ENCODE measurements at regions of chr16 and their contacts with region 1.

Region 1: DNA sequence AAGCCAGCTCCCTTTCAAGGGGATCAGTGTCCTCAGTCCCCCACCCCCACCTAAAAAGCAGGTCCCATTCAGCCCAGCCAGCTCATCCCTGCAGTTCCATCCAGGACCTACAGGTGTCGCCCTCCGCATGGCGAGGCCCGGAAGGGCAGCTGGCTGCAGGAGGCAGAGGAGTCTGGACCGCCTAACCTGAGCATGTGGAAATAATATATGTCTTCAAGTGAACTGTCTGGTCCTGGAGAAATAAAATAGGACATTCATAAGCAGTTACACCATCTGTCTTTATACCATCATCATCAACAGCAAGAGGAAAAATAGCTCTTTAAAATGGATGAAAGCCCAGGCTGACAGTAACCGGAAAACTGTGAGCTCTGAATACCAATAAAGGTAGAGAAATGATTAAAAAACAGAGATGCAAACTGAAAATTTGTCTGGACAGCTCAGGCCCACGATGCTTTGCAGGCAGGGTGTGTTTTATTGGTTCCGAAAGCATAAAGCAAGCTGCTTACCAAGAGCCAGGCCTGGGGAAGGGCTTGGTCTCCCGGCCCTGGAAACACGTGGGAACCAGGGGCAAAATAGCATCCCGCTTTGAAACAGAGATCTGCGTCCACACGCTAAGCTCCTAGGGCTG is 215.2 kb downstream of the ZFHX3 start:
- DNase-seq: peak; percentile 54 to 70 (median 62)
- H3K4me3 ChIP-seq: no peak overlapping the region
- H3K27ac ChIP-seq: no peak overlapping the region
- H3K4me1 ChIP-seq: peaks cover 0 to 18% (median 8%) of the 10 kb centered on the region in 4 experiments
- H3K27me3 ChIP-seq: no peaks in the 10 kb centered on the region

Region 2: DNA sequence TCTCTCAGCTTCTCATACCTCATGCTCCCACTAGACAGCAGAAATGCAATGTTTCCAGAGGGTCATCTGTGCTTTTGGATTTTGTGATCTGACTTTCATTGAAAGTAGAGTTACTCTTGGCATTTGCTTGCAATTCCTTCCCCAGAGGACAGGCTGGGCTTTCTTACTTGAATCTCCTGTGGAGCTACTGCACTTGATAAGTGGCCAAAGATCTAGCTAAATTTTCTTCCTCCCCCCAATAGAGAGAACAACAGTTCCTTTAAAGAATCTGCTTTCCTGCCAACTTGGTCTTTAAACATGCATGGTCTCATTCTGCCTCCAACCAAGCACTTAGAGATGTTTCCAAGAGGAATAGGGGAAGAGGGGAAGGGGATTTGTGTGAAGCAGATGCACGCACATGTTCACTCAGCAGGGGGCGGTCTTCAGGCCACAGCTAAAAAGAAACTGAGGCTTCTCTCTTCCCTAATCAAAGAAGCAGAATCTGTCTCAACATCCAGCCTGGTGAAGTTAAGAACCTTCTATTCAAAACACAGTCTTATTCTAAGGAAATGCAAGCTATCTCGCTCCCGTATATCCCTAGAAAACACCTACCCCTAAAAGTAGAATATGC is 14.4 kb before region 1 on chr16:
- CTCF ChIA-PET with region 1: interaction called, 10 read pairs
- POLR2A ChIA-PET with region 1: interaction called, 3 read pairs
- DNase-seq: no peak
- H3K4me3 ChIP-seq: no peak overlapping the region
- H3K27ac ChIP-seq: no peak overlapping the region
- H3K4me1 ChIP-seq: peaks cover 0 to 3% (median 0%) of the 10 kb centered on the region in 4 experiments
- H3K27me3 ChIP-seq: no peaks in the 10 kb centered on the region

Region 3: DNA sequence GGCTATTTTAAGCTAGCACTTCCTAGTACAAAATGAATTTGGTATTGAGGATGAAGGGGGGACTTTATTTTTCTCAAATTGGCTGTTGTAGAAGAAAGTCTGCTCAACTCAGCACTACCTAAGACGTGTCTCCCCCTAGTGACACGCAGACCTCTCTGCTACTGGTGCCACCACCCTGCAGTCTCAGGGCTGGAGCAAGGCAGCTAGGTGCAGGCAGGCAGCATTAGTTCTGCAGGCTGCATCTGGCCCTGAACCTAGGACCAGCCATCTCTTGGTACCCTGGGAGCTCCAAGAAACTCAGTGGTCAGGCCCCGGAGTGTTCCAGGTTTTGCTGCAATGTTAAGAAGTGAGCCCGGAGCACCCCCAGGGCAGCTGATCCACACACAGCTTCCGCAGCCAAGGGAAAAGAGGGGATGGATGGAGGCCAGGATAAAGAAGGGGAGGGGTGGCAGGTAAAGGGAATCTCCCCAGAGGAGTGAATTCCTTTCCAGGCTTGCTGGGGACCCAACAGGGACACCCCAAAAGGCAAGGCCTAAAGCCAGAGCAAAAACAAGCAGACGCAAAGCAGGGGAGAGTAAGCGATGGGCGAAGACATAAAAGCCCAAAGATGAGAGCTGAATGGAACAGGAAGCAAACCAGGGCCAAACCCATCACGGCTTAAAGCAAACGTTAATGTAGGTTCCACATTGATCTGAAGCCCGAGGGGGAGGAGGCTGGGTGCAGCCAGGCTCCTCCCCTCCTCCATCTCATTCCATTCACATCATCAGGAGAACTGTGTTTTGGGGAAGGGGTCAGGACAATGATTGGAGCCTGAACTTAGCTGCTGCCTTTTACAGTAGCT is 14.7 kb after region 1 on chr16:
- CTCF ChIA-PET with region 1: interaction called, 58 read pairs
- POLR2A ChIA-PET with region 1: no interaction called
- DNase-seq: peak; percentile 54 to 75 (median 71)
- H3K4me3 ChIP-seq: no peak overlapping the region
- H3K27ac ChIP-seq: no peak overlapping the region
- H3K4me1 ChIP-seq: peaks cover 0 to 61% (median 47%) of the 10 kb centered on the region in 4 experiments
- H3K27me3 ChIP-seq: no peaks in the 10 kb centered on the region

Region 4: DNA sequence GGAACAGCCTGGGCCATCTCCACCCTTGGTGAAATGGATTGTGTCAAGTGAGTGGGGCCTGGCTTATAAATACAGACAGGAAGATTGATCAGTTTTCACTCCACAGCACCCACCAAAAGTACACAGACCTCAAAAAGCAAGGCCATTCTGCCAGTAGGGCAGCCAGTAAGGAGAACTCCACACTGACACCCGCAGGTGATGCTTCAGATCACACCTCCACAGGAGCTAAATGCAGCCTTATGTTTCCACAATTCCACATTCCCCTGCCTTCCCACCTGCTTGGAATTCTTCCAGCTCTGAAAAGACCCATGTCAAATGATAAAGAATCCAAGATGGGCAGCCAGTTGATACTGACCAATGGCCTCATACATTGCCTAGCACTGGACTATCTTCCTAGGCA is 24.1 kb after region 1 on chr16:
- CTCF ChIA-PET with region 1: interaction called, 25 read pairs
- POLR2A ChIA-PET with region 1: no interaction called
- DNase-seq: peak in 2 of 3 donors; percentile 43 to 58
- H3K4me3 ChIP-seq: no peak overlapping the region
- H3K27ac ChIP-seq: no peak overlapping the region
- H3K4me1 ChIP-seq: peaks cover 8 to 39% (median 13%) of the 10 kb centered on the region in 4 experiments
- H3K27me3 ChIP-seq: no peaks in the 10 kb centered on the region

Region 5: DNA sequence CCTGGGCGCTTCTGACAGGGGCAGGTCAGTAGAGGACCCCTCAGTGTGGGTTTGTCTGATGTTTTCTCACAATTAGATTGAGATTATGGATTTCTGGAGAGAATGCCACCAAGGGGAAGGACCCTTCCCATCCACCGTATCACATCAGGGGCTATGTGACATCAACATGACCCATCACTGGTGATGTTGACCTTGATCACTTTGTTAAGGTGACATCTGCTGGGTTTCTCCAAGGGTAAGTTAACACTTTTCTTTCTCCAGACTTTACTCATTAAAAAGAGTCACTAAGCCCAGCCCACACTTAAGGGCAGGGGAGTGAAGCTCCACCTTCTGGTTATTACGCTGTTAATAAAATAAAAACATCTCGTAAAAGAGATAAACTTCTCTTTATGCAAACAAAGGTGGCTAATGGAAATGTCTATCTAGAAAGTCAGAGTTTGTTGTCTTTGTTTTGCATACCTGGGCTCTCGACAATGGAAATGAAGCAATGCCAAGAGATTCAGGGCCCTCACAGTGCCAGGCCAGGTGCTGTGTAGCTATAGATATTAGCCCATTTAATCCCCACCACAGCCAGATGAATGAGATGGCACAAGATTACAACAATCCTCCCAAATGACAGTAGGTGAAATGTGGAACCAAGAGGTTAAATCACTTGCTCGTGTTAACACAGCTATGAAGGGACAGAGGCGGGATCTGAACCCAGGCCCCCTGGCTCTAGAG is 80.8 kb after region 1 on chr16:
- CTCF ChIA-PET with region 1: no interaction called
- POLR2A ChIA-PET with region 1: no interaction called
- DNase-seq: no peak
- H3K4me3 ChIP-seq: no peak overlapping the region
- H3K27ac ChIP-seq: no peak overlapping the region
- H3K4me1 ChIP-seq: no peaks in the 10 kb centered on the region
- H3K27me3 ChIP-seq: no peaks in the 10 kb centered on the region

Region 6: DNA sequence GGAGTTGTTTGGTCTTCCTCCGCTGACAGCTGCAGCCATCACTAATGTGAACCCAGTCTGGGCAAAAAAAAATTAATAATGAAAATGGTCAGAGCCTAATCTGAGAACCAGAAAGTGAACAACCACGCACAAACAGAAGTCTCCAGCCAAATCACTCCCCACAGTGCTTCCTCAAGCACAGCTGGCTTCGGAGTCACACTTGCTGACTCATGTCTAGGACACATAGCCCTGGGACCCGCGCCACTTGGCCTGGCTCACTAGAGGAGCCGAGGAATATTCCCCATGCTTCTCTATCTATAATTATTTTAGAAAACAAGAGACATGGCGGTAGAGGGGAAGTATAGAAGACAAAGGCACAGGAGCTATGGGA is 106.0 kb after region 1 on chr16:
- CTCF ChIA-PET with region 1: interaction called, 11 read pairs
- POLR2A ChIA-PET with region 1: no interaction called
- DNase-seq: peak; percentile 68 to 92 (median 88)
- H3K4me3 ChIP-seq: peak overlapping the region in 2 of 7 experiments; percentile 23 to 26
- H3K27ac ChIP-seq: peak overlapping the region in 1 of 2 experiments; percentile 50
- H3K4me1 ChIP-seq: peaks cover 0 to 32% (median 21%) of the 10 kb centered on the region in 4 experiments
- H3K27me3 ChIP-seq: no peaks in the 10 kb centered on the region

Region 7: DNA sequence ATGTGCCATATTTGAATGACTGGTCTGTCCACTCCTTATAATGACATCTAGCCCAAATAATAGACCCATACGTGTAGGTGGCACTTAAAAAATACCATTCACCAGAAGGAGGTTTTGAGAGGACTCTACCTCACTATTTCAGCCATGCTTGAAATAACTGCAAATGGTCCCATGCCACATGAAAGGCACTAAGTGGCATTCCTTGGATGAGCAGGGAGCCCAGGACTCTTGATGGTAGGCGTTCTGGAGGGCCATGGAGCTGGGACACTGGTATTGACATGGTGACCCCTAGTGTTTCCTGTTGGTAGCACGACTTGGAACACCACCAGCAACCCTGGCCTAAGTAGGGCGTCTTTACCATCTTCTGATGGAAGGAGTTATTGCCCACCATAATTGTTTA is 363.9 kb after region 1 on chr16:
- CTCF ChIA-PET with region 1: interaction called, 12 read pairs
- POLR2A ChIA-PET with region 1: interaction called, 3 read pairs
- DNase-seq: peak; percentile 70 to 81 (median 73)
- H3K4me3 ChIP-seq: no peak overlapping the region
- H3K27ac ChIP-seq: no peak overlapping the region
- H3K4me1 ChIP-seq: peaks cover 0 to 4% (median under 1%) of the 10 kb centered on the region in 4 experiments
- H3K27me3 ChIP-seq: no peaks in the 10 kb centered on the region